ENCODE measurements at regions of chr1 and their contacts with region 1.

Region 1: DNA sequence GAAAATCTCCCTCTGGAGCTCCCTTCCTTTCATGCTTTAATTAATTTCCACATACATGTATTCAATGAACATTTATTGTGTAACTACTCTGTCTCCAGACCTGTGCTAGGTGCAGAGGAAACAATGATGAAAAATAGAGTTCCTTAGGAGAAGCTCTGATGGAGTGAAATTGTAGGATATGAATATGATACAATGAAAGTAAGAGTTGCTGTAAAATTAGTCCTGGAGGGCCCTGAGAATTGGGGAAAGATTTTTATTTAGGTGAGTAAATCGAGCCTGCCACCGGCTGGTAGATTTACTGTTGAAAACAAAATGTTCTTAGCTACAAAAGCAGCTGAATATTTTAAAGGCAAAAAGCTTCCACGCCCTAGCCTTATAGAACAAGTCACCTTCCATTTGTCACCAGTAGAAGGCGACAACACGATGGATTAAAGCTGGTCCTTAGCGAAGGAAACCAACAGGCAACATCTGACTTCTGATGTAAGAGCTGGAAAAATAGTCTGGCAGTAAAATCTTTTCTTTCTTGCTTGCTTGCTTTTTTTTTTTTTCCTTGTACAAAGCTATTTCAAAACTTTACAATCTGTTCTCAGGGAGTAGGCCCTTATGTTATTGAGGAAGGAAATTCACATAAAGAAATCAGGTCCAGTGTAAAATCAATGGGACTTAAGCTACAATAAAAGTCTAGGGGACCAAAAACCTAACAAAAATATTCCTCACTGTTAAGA is 82.0 kb upstream of the ROR1 start:
- DNase-seq: peak; percentile 76
- H3K4me3 ChIP-seq: no peak overlapping the region
- H3K27me3 ChIP-seq: peaks cover 5% of the 10 kb centered on the region
- CTCF ChIP-seq: peak; percentile 77

Region 2: GRCh38 chr1:63674238-63674864 is 17.5 kb before region 1 on chr1:
- CTCF ChIA-PET with region 1: interaction called, 32 read pairs
- POLR2A ChIA-PET with region 1: no interaction called
- DNase-seq: no peak
- H3K4me3 ChIP-seq: no peak overlapping the region
- H3K27me3 ChIP-seq: no peaks in the 10 kb centered on the region
- CTCF ChIP-seq: peak; percentile 87

Region 3: GRCh38 chr1:63917571-63918417 is 225.9 kb after region 1 on chr1:
- CTCF ChIA-PET with region 1: interaction called, 15 read pairs
- POLR2A ChIA-PET with region 1: no interaction called
- DNase-seq: no peak
- H3K4me3 ChIP-seq: no peak overlapping the region
- H3K27me3 ChIP-seq: peaks cover 16% of the 10 kb centered on the region
- CTCF ChIP-seq: no peak; the same call in 1 of the 2 replicates

Region 4: DNA sequence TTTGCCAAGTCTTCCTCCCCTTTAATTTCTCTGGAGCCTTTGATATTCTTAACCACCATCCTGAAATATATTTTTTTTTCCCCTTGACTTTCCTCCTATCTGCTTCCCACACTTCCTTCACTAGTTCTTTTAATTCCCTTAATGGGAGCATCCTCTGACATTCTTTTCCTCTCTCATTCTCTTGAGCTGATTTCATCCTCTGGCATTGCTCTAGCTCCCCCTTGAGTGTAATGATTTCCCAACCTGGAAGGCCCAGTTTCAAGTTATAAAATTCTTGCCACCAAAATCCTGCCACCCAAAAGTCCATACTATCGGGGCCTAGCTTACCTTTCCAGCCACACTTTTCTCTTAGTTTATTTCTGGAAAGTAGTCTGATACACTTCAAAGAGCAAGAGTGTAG is 472.1 kb after region 1 on chr1:
- CTCF ChIA-PET with region 1: interaction called, 14 read pairs
- POLR2A ChIA-PET with region 1: no interaction called
- DNase-seq: no peak
- H3K4me3 ChIP-seq: no peak overlapping the region
- H3K27me3 ChIP-seq: no peaks in the 10 kb centered on the region
- CTCF ChIP-seq: peak; percentile 75

Region 5: GRCh38 chr1:64242895-64243756 is 551.3 kb after region 1 on chr1:
- CTCF ChIA-PET with region 1: interaction called, 23 read pairs
- POLR2A ChIA-PET with region 1: no interaction called
- DNase-seq: no peak
- H3K4me3 ChIP-seq: no peak overlapping the region
- H3K27me3 ChIP-seq: no peaks in the 10 kb centered on the region; the same call in 1 of the 2 replicates
- CTCF ChIP-seq: peak; percentile 35

Measured in BJ (cell line).